Gastrocnemius medialis (tissue), 4 donors: ENCODE measurements at regions of chr12 and their contacts with region 1.

Region 1: GRCh38 chr12:112012775-112013600 is at the starts of genes ERP29 and TMEM116:
- DNase-seq: peak; percentile 99 to 100
- ATAC-seq: peak; percentile 87 to 88
- H3K4me3 ChIP-seq: peak within 1 kb of the TSS; percentile 89 to 98 (median 96)
- H3K27ac ChIP-seq: peak within 1 kb of the TSS; percentile 93 to 98 (median 97)
- H3K4me1 ChIP-seq: peaks cover 24 to 31% of the 10 kb centered on the region in 2 donors
- H3K27me3 ChIP-seq: no peaks in the 10 kb centered on the region
- CTCF ChIP-seq: peak; percentile 72 to 81 (median 78)
- POLR2A ChIP-seq: peak; percentile 96 to 97
- total RNA-seq, gene ERP29: 9.9 to 20.9 (median 16.8) TPM
- total RNA-seq, gene TMEM116: 1.9 to 8.5 (median 4.3) TPM

Region 2: GRCh38 chr12:111841750-111842555 is 171.0 kb before region 1 on chr12 and contains the start of gene MAPKAPK5:
- in situ Hi-C with region 1: no loop called
- intact Hi-C with region 1: loop called (anchors 5 kb)
- DNase-seq: peak; percentile 89 to 94
- ATAC-seq: peak; percentile 93 to 94
- H3K4me3 ChIP-seq: peak within 1 kb of the TSS; percentile 54 to 93 (median 84)
- H3K27ac ChIP-seq: peak within 1 kb of the TSS; percentile 82 to 96 (median 90)
- H3K4me1 ChIP-seq: peaks cover 34 to 41% of the 10 kb centered on the region in 2 donors
- H3K27me3 ChIP-seq: no peaks in the 10 kb centered on the region
- CTCF ChIP-seq: peak in 2 of 5 experiments; percentile 22 to 38
- POLR2A ChIP-seq: peak; percentile 68
- total RNA-seq, gene MAPKAPK5: 32.3 to 57.8 (median 48.0) TPM

Region 3: DNA sequence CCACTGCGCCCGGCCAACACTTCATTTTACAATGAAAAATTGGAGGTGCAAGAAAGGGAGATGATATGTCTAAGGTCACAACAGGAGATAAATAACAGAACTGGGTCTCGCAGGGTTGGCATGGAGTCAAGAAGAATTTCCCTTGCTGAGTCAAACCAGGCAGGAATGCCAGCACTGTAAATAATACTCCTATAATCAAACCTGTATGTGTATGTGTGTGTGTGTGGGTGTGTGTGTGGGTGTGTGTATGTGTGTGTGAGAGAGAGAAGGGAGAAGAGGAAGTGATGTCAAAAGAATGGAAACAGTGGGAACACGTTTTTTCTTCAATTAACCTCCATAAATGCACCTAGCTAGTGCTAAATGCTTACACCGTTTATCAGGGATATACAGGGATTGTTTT is 70.4 kb before region 1 on chr12:
- in situ Hi-C with region 1: loop called in 1 of 4 experiments (anchors 10 kb)
- intact Hi-C with region 1: loop called (anchors 1 kb)
- DNase-seq: no peak
- ATAC-seq: no peak
- H3K4me3 ChIP-seq: no peak overlapping the region
- H3K27ac ChIP-seq: no peak overlapping the region
- H3K4me1 ChIP-seq: peaks cover 9 to 13% of the 10 kb centered on the region in 2 donors
- H3K27me3 ChIP-seq: no peaks in the 10 kb centered on the region
- CTCF ChIP-seq: no peak
- POLR2A ChIP-seq: no peak